KBM-7 (cell line): ENCODE measurements at regions of chr2 and their contacts with region 1.

Region 1: GRCh38 chr2:196068271-196069209 is at the start of gene DNAH7:
- DNase-seq: peak; percentile 97

Region 2: GRCh38 chr2:195318440-195319111 is 750.0 kb before region 1 on chr2:
- in situ Hi-C with region 1: loop called (anchors 25 kb)
- DNase-seq: peak; percentile 75

Region 3: GRCh38 chr2:195967336-195967735 is 101.2 kb before region 1 on chr2:
- in situ Hi-C with region 1: no loop called
- DNase-seq: no peak